ENCODE measurements at regions of chr12 and their contacts with region 1.

Region 1: GRCh38 chr12:113932381-113933196 is 33.5 kb downstream of the RBM19 start:
- DNase-seq: no peak
- ATAC-seq: no peak
- H3K4me3 ChIP-seq: no peak overlapping the region
- H3K4me3 Mint-ChIP-seq: no peak overlapping the region
- H3K27ac ChIP-seq: no peak overlapping the region
- H3K27ac Mint-ChIP-seq: no peak overlapping the region
- H3K4me1 ChIP-seq: peaks cover 0 to 4% of the 10 kb centered on the region in 2 experiments
- H3K4me1 Mint-ChIP-seq: peaks cover 10 to 18% (median 12%) of the 10 kb centered on the region in 3 donors
- H3K27me3 ChIP-seq: no peaks in the 10 kb centered on the region
- H3K27me3 Mint-ChIP-seq: no peaks in the 10 kb centered on the region

Region 2: DNA sequence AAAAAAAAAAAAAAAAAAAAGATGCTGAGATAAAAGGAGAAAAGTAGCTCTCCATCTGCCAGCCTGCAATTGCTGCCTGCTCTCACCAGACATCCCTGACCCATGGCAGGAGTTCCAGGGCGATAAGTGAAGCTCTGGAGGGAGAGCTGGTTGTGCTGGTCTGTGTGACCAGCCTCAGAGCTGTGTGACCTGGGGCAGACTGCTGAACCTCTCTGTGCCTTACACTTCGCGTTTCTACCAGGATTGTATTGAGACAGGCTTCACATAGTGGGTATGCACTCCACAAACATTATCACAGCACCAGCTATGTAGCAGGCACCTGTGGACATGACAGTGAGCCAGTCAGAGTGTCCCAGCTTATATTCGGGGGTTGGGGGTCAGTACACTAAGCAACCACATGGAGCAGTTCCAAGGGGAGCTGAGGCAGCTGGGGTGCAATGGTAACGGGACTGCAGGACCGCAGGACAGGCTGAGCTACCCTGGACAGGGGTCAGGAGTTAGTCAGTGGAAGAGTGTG is 23.9 kb before region 1 on chr12:
- CTCF ChIA-PET with region 1: no interaction called
- POLR2A ChIA-PET with region 1: interaction called in 1 of 2 experiments, 13 read pairs
- DNase-seq: no peak
- ATAC-seq: no peak
- H3K4me3 ChIP-seq: no peak overlapping the region
- H3K4me3 Mint-ChIP-seq: no peak overlapping the region
- H3K27ac ChIP-seq: no peak overlapping the region
- H3K27ac Mint-ChIP-seq: no peak overlapping the region
- H3K4me1 ChIP-seq: no peaks in the 10 kb centered on the region
- H3K4me1 Mint-ChIP-seq: no peaks in the 10 kb centered on the region
- H3K27me3 ChIP-seq: no peaks in the 10 kb centered on the region
- H3K27me3 Mint-ChIP-seq: no peaks in the 10 kb centered on the region

Region 3: DNA sequence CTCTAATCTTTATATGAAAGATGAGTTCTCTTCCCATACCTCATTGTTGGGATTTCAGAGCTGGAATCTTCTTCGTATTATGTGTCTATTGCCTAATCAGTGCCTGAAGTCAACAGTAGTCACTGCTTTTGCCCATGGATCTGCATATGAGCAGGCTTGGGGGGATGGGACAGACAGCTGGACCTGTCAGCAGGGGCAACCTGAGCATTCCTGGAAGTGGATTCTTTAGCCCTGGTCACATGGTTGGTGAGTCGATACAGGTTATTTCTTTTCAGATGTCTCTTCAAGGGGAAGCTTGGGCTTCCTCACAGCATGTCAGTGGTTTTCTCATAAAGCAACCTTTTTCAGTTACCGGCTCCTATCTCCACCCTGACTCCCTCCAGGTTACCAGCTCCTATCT is 130.8 kb after region 1 on chr12:
- CTCF ChIA-PET with region 1: no interaction called
- POLR2A ChIA-PET with region 1: no interaction called
- DNase-seq: no peak
- ATAC-seq: no peak
- H3K4me3 ChIP-seq: no peak overlapping the region
- H3K4me3 Mint-ChIP-seq: no peak overlapping the region
- H3K27ac ChIP-seq: no peak overlapping the region
- H3K27ac Mint-ChIP-seq: no peak overlapping the region
- H3K4me1 ChIP-seq: no peaks in the 10 kb centered on the region
- H3K4me1 Mint-ChIP-seq: no peaks in the 10 kb centered on the region
- H3K27me3 ChIP-seq: peaks cover 0 to 11% of the 10 kb centered on the region in 2 experiments
- H3K27me3 Mint-ChIP-seq: peaks cover 3 to 8% of the 10 kb centered on the region in 2 donors

Measured in T-cell (primary cell).